Esophagus muscularis mucosa (tissue), 4 donors: ENCODE measurements at regions of chr1 and their contacts with region 1.

Region 1: DNA sequence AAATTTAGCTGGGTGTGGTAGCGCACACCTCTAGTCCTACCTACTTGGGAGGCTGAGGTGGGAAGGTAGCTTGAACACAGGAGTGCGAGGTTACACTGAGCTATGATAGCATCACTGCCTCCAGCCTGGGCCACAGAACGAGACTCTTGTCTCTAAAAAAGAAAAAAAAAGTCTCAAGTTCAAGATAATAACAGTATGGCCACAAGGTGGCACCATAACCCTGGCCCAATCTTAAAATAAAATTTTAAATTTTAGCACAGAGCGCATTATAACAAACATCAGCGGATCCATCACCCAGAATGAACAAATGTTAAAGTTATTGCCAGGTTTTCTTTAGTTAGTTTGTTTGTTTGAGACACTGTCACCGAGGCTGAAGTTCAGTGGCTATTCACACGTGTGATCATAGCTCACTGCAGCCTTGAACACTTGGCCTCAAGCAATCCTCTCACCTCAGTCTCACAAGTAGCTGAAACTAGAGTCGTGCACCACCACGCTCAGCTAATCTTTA is 2.9 kb upstream of the HTR6 start:
- DNase-seq: no peak
- H3K4me3 ChIP-seq: no peak overlapping the region
- H3K27ac ChIP-seq: no peak overlapping the region
- H3K4me1 ChIP-seq: peaks cover 9 to 49% (median 27%) of the 10 kb centered on the region in 4 donors
- H3K27me3 ChIP-seq: peaks cover 18 to 47% (median 33%) of the 10 kb centered on the region in 4 donors
- CTCF ChIP-seq: peak; percentile 58 to 78 (median 70)
- EP300 ChIP-seq: no peak
- POLR2A ChIP-seq: no peak

Region 2: DNA sequence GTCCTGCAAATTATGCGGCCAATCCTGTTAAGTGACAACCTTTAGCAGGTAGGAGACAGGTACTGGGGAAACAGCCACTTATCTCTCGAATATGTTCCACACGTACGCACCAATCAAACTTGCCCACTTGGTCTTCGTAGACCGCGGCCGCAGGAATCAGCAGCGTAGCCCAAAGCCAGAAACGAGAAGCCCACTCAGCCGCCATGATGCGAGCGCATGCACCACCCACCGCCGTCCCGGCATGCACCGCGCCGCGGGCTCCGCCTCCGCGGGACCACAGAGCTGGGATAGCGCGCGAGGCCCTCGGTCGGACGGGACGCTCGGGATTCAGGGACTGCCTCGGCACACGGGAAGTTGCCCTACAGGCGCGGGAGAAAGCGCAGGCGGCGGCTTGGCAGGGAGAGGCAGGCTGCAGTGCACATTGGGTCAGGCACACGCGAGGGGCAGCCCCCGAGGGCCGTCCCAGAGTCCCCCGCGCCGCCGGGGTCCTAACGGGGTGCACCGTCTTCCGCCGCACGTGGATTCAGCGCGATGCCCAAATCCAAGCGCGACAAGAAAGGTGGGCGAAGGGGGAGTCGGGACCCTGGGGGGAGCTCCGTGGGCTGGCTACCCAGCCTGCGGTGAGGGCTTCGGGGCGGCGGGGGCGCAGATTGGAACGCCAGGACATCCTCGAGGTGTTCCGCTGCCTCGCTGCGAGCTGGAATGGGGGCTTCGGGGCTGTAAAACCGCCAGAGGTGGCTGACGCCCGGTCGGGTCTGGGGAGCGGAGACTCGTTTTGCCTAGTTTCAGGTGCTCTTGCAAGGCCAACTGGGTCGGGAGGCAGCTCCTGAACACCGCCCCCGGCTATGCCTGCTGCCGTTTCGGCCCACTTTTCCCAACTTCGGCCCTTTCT is 410.2 kb before region 1 on chr1 and contains the starts of genes EMC1 and MRTO4:
- intact Hi-C with region 1: loop called (anchors 5 kb)
- DNase-seq: peak; percentile 95
- H3K4me3 ChIP-seq: peak within 1 kb of the TSS; percentile 77 to 92 (median 86)
- H3K27ac ChIP-seq: peak within 1 kb of the TSS; percentile 83 to 94 (median 92)
- H3K4me1 ChIP-seq: peaks cover 30 to 47% (median 39%) of the 10 kb centered on the region in 4 donors
- H3K27me3 ChIP-seq: no peaks in the 10 kb centered on the region
- CTCF ChIP-seq: no peak
- EP300 ChIP-seq: no peak
- POLR2A ChIP-seq: no peak
- total RNA-seq, gene EMC1: 16.2 to 43.1 (median 36.1) TPM
- total RNA-seq, gene MRTO4: 10.0 to 26.2 (median 16.9) TPM

Region 3: GRCh38 chr1:19704247-19705113 is 42.7 kb after region 1 on chr1:
- intact Hi-C with region 1: loop called (anchors 2 kb)
- DNase-seq: no peak
- H3K4me3 ChIP-seq: no peak overlapping the region
- H3K27ac ChIP-seq: no peak overlapping the region
- H3K4me1 ChIP-seq: peaks cover 8 to 29% (median 22%) of the 10 kb centered on the region in 4 donors
- H3K27me3 ChIP-seq: no peaks in the 10 kb centered on the region
- CTCF ChIP-seq: peak; percentile 86 to 96 (median 88)
- EP300 ChIP-seq: no peak
- POLR2A ChIP-seq: no peak